HEK293 (cell line): ENCODE measurements at regions of chr5 and their contacts with region 1.

Region 1: GRCh38 chr5:141349917-141350619 is at the start of gene PCDHGB1:
- H3K4me3 ChIP-seq: peak within 1 kb of the TSS; percentile 34
- H3K27ac ChIP-seq: no peak within 1 kb of the TSS
- H3K4me1 ChIP-seq: peaks cover 2% of the 10 kb centered on the region; the same call in 1 of the 2 replicates
- CTCF ChIP-seq: peak; percentile 47; the same call in 1 of the 2 replicates

Region 2: DNA sequence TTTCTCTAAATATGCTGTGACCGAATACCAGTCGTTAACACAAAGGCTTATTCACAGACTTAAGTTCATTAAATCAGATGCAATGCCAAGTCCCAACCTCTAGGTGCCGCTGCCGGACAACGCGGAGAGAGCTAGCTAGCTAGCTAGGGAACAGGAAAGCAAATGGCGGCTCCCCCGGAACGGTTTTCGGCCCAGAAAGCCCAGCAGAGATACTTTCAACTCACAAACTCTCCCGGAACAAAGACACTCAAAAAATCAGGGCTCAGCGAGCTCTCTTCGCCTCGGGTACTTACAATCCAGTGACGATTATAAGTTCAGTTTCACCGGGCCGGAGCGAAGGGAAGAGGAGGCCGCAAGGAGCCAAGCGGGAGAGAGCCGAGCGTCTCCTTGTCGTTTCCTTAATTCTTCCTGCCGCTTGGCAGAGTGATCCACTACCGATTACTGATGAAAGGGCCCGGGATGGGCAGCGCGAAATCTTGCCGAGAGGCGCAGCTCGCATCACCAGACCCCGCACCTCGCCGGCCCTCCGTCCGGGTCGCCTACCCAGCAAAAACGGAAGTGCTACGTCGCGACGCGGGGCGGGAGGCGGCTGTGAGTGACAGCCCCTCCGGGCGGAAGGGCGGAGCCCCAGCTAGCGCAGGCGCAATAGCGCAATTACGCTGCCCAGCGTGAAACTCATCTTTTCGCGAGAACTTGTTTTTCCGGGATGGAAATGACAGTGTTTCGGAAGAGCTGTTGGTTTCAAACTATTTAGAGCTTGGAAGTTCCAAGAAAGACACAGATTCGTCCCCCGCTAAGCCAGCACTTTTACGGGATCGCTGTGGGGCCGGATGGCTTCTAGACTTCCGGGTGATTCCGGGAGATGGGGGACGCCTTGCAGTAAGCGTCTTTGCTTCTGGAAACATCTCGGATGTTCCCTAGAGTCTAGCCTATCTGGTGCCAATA is 29.6 kb before region 1 on chr5 and contains the start of gene TAF7:
- CTCF ChIA-PET with region 1: interaction called, 12 read pairs
- POLR2A ChIA-PET with region 1: interaction called, 5 read pairs
- H3K4me3 ChIP-seq: peak within 1 kb of the TSS; percentile 66
- H3K27ac ChIP-seq: peak within 1 kb of the TSS; percentile 61
- H3K4me1 ChIP-seq: no peaks in the 10 kb centered on the region
- CTCF ChIP-seq: peak; percentile 77

Region 3: DNA sequence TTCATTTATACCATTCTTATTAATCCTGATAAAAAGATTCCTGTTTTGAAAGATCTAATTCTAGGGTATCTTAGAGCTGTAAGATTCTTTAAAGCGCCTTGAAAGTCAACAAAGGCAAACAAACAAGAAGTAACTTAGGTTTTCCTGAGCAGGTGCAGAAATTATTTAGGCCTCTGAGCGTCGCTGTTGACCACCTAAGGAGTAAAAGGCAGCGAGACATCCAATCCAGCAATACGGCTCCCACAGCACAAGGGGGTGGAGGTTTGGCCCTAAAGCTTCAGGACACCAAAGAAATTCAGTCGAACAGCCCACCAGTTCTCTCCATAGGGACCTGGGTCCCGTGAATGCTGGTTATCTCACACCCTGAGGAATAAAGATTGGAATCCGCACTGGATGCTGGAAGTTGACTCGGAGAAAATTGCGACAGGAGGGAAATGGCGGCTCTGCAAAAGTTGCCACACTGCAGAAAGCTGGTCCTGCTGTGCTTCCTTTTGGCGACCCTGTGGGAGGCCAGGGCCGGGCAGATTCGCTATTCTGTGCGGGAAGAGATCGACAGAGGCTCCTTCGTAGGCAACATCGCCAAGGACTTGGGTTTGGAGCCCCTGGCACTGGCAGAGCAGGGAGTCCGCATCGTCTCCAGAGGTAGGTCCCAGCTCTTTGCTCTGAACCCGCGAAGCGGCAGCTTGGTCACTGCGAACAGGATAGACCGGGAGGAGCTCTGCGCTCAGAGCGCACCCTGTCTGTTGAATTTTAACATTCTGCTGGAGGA is 11.3 kb before region 1 on chr5 and contains the start of gene PCDHGA2:
- CTCF ChIA-PET with region 1: interaction called, 33 read pairs
- POLR2A ChIA-PET with region 1: no interaction called
- H3K4me3 ChIP-seq: no peak within 1 kb of the TSS
- H3K27ac ChIP-seq: no peak within 1 kb of the TSS
- H3K4me1 ChIP-seq: no peaks in the 10 kb centered on the region
- CTCF ChIP-seq: no peak

Region 4: GRCh38 chr5:141369994-141370848 is 20.2 kb after region 1 on chr5 and contains the start of gene PCDHGB3:
- CTCF ChIA-PET with region 1: interaction called, 20 read pairs
- POLR2A ChIA-PET with region 1: no interaction called
- H3K4me3 ChIP-seq: no peak within 1 kb of the TSS
- H3K27ac ChIP-seq: no peak within 1 kb of the TSS
- H3K4me1 ChIP-seq: no peaks in the 10 kb centered on the region
- CTCF ChIP-seq: no peak

Region 5: GRCh38 chr5:141484641-141485311 is 134.7 kb after region 1 on chr5 and contains the start of gene PCDHGC4:
- CTCF ChIA-PET with region 1: interaction called, 14 read pairs
- POLR2A ChIA-PET with region 1: no interaction called
- H3K4me3 ChIP-seq: peak within 1 kb of the TSS; percentile 40
- H3K27ac ChIP-seq: no peak within 1 kb of the TSS
- H3K4me1 ChIP-seq: peaks cover 9% of the 10 kb centered on the region
- CTCF ChIP-seq: no peak